ENCODE measurements at regions of chr5 and their contacts with region 1.

Region 1: GRCh38 chr5:79936002-79936645 is 54.9 kb downstream of the MTX3 start:
- DNase-seq: no peak
- H3K4me3 ChIP-seq: no peak overlapping the region
- H3K27ac ChIP-seq: no peak overlapping the region
- H3K4me1 ChIP-seq: peaks cover 0 to 3% of the 10 kb centered on the region in 2 donors
- H3K27me3 ChIP-seq: no peaks in the 10 kb centered on the region
- CTCF ChIP-seq: no peak
- POLR2A ChIP-seq: no peak

Region 2: DNA sequence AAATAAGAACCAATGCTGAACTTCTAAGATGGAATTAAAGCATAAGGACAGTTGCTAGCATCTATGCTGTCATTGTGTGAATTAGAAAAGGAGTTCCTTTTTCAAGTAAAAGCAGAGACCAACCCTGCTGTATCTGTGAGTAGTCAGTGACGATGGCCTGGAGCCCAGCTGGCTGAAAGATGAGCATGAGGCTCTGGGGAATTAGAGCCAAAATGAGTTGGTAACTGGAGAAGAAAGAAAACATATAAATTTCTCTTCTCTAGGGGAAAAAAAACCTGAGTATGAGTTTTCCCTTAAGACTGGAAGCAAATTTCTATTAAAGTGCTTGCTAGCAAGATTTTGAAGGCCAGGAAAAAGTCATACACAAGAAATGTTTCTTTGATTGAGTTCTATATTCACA is 382.1 kb after region 1 on chr5:
- intact Hi-C with region 1: no loop called
- DNase-seq: no peak
- H3K4me3 ChIP-seq: no peak overlapping the region
- H3K27ac ChIP-seq: no peak overlapping the region
- H3K4me1 ChIP-seq: no peaks in the 10 kb centered on the region
- H3K27me3 ChIP-seq: no peaks in the 10 kb centered on the region
- CTCF ChIP-seq: no peak
- POLR2A ChIP-seq: no peak

Region 3: DNA sequence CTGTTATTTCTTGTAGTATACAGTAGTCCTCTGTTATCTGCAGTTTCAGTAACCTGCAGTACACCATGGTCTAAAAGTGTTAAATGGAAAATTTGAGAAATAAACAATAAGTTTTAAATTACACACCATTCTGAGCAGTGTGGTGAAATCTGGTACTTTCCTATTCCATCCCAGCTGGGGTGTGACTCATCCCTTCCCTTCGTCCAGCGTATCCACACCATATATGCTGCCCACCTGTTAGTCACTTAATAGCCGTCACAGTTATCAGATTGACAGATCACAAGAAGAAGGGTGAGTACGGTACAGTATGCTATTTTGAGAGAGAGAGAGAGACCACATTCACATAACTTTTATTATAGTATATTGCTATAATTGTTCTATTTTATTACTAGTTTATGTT is 580.7 kb after region 1 on chr5:
- intact Hi-C with region 1: loop called (anchors 5 kb)
- DNase-seq: no peak
- H3K4me3 ChIP-seq: no peak overlapping the region
- H3K27ac ChIP-seq: no peak overlapping the region
- H3K4me1 ChIP-seq: no peaks in the 10 kb centered on the region
- H3K27me3 ChIP-seq: no peaks in the 10 kb centered on the region
- CTCF ChIP-seq: no peak
- POLR2A ChIP-seq: no peak